Endothelial cell of umbilical vein (primary cell): ENCODE measurements at regions of chr15 and their contacts with region 1.

Region 1: GRCh38 chr15:66707310-66708082 is 5.5 kb downstream of the SMAD6 start:
- DNase-seq: peak; percentile 54
- H3K4me3 ChIP-seq: no peak overlapping the region
- H3K27ac ChIP-seq: peak overlapping the region; percentile 15
- H3K4me1 ChIP-seq: peaks cover 40% of the 10 kb centered on the region
- H3K27me3 ChIP-seq: no peaks in the 10 kb centered on the region
- CTCF ChIP-seq: peak in 1 of 2 donors; percentile 40
- POLR2A ChIP-seq: peak; percentile 15

Region 2: DNA sequence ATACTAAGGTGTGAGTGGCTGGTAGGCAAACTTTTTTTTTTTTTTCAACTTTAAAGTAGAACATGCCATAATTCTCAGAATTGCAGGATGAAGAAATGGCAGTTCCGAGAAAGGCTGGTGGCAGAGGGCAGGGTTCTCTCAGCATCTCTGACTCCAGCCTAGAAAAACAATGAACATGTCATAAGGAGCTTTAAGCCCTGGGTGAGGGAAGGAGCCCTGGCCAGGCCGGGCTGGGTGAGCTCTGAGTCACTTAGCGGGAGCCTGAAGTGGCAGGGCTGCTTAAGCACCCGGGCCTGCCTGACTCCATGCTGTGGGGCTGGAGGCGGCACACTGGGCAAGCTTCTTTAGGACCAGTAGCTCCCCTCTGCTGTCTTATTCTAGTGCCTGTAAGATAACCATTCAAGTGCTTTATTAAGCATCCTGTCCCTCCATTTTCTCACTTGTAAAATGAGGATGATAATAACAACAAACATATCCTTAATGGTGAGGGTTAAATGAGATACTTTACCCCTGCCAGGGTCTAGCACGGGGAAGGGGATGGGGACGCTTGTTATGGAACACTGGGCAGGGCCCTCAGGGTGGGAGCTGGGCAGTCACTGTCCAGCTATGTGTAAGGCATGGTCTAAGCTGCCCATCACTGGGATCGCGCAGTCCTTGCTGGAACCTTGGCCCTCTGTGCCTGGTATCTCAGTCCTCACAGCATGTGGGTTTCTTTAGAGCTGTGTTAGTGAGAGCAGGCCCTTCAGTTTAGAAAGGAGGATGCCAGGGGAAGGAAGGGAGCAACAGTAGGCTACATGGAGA is 12.9 kb after region 1 on chr15:
- CTCF ChIA-PET with region 1: interaction called, 19 read pairs
- POLR2A ChIA-PET with region 1: interaction called, 3 read pairs
- dilution Hi-C with region 1: no loop called
- intact Hi-C with region 1: no loop called
- DNase-seq: peak; percentile 56
- H3K4me3 ChIP-seq: no peak overlapping the region
- H3K27ac ChIP-seq: peak overlapping the region; percentile 11
- H3K4me1 ChIP-seq: peaks cover 53% of the 10 kb centered on the region
- H3K27me3 ChIP-seq: no peaks in the 10 kb centered on the region
- CTCF ChIP-seq: no peak
- POLR2A ChIP-seq: no peak

Region 3: DNA sequence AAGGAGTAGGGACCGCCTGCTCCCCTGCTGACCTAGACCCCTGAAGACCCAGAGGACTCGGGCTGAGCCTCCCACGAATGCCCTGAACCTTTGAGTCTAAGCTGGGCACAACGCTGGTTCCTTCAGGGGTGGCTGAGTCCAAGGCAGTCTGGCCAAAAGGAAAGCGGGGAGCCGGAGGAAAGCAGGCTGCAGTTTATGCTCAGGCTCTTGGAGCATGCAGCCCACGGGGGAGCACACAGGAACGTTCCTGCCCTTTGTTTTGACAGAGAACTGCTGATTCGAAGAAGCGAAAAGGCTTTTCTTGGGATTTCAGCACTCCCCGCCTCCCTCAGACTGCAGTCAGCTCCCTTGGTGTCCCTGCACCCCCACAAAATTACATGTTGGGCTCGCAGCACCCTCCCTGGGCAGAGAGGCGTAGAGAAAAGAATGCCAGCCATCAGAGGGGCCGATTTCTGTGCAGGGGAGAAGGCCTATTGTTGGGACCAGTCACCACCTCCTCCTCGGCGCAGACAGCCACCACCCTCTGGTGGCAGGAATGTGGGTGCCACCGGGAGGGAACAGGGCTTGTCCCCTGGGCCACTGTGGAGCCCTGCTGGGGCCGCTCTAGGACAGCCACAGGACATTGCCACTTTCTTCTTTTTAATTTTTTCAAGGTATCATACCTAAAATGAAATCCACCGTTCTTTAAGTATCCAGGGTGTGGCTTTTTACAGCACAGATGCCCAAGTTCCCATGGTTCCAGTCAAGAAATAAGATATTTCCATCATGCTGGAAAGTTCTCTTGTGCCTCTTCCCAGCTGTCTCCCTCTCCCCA is 66.7 kb after region 1 on chr15:
- CTCF ChIA-PET with region 1: interaction called, 118 read pairs
- POLR2A ChIA-PET with region 1: no interaction called
- dilution Hi-C with region 1: no loop called
- intact Hi-C with region 1: loop called (anchors 1 kb)
- DNase-seq: peak; percentile 80
- H3K4me3 ChIP-seq: no peak overlapping the region
- H3K27ac ChIP-seq: peak overlapping the region; percentile 25
- H3K4me1 ChIP-seq: peaks cover 21% of the 10 kb centered on the region
- H3K27me3 ChIP-seq: no peaks in the 10 kb centered on the region
- CTCF ChIP-seq: peak; percentile 92 to 96
- POLR2A ChIP-seq: no peak

Region 4: DNA sequence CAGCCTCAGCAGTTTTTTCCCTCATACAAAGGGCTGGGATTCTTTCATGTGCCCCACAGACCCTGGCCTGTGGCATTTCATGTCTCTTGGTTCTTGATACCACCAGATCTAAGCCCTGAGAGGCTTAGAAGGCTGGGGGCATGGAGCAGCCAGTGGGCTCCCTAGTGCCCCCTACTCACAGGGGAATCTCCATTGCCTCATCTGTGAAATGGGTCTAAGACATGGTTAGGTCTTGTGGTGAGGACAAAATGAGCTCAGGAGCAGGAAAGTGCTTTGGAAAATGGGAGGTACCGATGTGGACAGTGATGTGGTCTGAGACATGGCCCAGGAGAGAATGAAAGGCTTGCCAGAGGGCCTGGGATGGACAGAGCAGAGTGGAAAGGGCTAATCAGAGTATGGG is 88.8 kb after region 1 on chr15:
- CTCF ChIA-PET with region 1: no interaction called
- POLR2A ChIA-PET with region 1: no interaction called
- dilution Hi-C with region 1: no loop called
- intact Hi-C with region 1: no loop called
- DNase-seq: no peak
- H3K4me3 ChIP-seq: no peak overlapping the region
- H3K27ac ChIP-seq: no peak overlapping the region
- H3K4me1 ChIP-seq: no peaks in the 10 kb centered on the region
- H3K27me3 ChIP-seq: no peaks in the 10 kb centered on the region
- CTCF ChIP-seq: no peak
- POLR2A ChIP-seq: no peak